ENCODE measurements at regions of chr9 and their contacts with region 1.

Region 1: DNA sequence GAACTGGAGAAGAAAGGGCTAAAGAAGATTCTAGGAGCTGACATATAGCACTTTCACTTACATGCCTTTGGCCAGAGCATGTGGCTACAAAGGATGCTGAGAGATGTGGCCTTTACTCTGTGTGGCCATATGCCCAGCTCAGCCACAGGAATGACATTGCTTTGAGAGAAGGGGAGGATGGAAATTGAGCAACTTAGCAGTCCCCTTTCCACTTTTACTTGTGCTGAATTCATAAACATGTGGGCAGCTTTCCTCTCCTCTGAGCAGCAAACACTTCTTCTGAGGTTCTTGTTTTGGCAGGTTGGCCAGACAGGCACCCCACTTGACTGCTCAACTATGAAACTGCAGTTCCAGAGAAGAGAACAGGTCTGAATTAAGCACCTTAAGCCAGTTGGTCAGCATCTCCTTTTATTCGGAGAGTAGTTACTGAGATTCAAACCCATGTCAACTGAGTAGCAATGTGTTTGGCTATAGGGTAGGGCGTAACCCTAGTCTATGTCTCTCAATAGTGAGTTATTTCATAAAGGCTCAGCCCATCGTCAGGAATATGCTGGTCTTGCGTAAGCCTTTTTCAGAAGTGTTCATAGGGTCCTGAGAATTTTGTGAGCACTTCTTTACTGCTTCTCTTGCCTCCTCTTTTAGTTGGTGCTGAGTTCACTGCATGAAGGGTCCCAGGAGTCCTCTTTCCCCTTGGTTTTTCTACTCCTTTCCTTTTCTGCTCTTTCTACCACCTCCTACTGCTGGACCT is 134.5 kb downstream of the PALM2AKAP2 start:
- DNase-seq: no peak
- ATAC-seq: peak; percentile 69

Region 2: DNA sequence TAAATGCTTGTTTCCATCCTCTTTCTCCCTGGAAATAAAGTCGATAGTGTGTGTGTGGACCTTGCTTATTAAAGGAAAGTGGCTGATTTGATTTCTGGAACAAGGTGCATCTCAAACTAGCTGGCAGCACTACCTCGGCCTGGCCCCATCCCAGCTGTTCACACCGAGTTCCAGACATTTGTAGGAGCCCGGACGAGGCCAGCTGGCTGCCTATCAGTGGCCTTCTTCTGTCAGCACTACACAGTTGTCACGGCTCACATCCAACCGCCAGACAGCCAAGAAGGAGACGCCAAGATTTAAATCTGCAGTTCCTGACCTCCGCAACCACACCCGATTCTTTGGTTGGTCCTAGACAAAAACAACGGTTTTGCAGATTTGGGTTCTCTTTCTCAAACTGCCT is 70.8 kb before region 1 on chr9:
- intact Hi-C with region 1: no loop called
- DNase-seq: no peak
- ATAC-seq: peak; percentile 28

Region 3: GRCh38 chr9:109953813-109954497 is 39.5 kb after region 1 on chr9:
- intact Hi-C with region 1: no loop called
- DNase-seq: no peak
- ATAC-seq: no peak

Region 4: GRCh38 chr9:110161940-110162339 is 247.5 kb after region 1 on chr9:
- intact Hi-C with region 1: loop called (anchors 5 kb)
- DNase-seq: no peak
- ATAC-seq: no peak

Measured in sciatic nerve (tissue), 2 donors.